ENCODE measurements at regions of chr17 and their contacts with region 1.

Region 1: DNA sequence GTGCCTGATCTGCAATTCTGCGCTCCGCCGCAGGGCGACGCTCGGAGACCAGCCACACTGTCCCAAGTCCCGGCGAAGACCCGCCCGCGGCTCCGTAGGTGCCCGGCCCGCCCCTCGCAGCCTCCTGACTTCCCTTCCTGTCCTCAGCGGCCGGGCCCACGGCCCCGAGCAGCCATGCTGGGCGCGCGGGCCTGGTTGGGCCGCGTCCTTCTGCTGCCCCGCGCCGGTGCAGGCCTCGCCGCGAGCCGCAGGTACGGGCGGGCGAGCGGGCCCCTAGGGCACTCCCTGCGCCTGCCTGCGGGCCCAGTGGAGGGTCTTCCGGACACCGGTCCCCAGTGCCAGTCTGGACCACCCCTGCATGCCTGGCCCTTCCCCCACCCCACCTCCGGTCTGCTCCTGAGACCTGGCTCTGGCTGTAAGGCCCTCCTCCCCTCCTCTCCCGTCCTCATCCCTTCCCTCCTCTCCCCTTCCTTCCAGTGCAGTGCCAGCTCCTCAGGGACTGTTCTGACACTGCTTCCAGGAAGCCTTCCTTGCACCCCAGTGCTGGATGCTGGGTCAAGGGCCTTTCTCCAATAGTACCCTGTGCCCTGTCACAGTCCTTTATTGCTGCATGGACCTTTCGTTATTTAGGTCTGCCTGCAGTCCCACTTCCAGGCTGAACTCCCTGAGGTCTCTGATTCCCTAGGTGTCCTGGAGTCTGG is at the start of gene SPATA20:
- DNase-seq: peak; percentile 94
- total RNA-seq, gene SPATA20: 51.9 TPM

Region 2: GRCh38 chr17:50613007-50613992 is 66.1 kb after region 1 on chr17:
- intact Hi-C with region 1: loop called (anchors 2 kb)
- DNase-seq: no peak

Region 3: GRCh38 chr17:50626037-50626574 is 78.9 kb after region 1 on chr17:
- intact Hi-C with region 1: loop called (anchors 2 kb)
- DNase-seq: no peak

Region 4: GRCh38 chr17:50681263-50682210 is 134.4 kb after region 1 on chr17:
- intact Hi-C with region 1: loop called (anchors 2 kb)
- DNase-seq: no peak

Region 5: DNA sequence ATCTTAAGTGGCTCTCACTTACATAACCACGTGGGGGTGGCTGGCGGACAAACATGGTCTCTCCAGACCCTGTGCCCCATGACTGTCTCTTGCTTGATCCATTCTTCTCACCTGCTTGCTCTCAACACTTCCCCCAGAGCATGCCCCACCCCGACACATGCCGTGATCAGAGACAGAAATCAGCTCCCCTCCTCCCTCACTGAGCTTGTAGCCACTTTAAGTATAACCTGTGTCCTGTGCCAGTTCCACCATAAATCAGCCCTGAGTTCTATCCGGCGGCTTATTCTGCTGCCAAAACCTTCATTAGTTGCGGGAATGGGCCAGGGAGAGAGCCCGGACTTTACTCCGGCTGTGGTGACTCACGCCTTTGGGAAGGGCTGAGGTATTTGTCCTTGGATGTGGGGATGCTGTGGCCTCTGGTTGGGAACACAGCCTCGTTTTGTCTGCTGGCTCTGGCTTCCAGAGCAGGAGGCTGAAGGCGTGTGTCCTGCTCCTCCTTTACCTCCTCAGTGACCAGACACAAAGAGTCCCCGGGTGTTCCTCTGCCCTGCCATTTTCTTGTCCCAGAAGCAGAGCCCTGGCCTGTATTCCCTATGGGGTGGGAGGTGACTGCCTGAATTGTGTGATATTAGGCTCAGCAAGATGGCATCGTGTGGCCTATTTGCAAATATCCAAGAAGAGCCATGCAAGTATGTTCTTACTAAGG is 139.5 kb after region 1 on chr17:
- intact Hi-C with region 1: loop called (anchors 2 kb)
- DNase-seq: peak; percentile 78

Region 6: DNA sequence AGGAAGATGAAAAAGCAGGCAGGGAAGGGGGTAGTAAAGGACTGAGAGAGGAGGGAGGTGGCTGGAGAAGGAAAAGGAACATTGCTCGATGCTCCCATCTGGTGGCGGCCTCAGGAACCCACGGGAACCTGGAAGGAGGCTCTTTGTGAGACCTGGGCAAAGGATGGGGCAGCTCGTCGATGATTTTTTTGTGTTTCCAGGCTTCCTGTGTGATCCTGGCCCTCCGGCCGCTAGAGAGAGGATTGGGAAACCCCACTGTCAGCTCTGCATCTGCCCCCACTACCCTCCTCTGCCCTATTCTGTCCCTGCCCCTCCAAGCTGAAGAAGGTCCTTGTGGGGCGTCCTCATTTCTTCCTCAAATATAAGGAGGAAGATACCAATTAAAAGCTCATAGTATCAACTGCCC is 294.8 kb after region 1 on chr17:
- intact Hi-C with region 1: loop called (anchors 2 kb)
- DNase-seq: no peak

Region 7: GRCh38 chr17:50949989-50950881 is 403.1 kb after region 1 on chr17:
- intact Hi-C with region 1: loop called (anchors 10 kb)
- DNase-seq: peak; percentile 91

Measured in cardiac septum (tissue), 1 donor.